Dorsolateral prefrontal cortex (tissue), 120 donors: ENCODE measurements at regions of chr5 and their contacts with region 1.

Region 1: DNA sequence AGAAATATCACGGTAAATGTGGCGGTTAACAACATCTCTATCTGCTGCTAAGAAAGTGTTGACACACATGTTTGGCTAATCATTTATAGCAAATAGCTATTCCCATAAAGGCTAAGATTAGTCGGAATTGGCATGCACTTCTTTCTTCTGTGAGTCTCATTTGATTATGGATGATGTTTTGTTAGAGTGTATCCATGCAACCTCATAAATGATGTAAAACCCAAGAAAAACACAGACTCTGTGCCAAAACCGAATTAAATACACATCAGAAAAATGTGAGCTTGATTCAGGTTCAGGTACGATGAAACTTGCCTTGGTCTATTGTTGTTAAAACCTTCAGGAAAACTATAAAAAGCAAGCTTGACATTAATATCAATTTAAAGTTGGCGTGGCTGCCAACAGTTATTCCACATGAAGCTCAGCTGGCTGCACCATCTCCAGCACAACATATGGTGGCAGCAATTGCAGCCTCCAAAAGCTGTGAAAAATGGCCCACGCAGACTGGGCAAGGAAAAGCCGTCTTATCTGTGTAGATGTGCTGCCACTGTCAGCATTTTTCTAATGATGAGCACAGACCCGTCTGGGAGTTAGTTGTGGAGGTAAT is 41.1 kb upstream of the ICE1 start:
- DNase-seq: peak; percentile 24 to 80 (median 62)
- H3K4me3 ChIP-seq: no peak overlapping the region
- H3K27ac ChIP-seq: peak overlapping the region in 4 of 59 donors; percentile 29 to 60 (median 58)
- H3K27me3 ChIP-seq: no peaks in the 10 kb centered on the region
- CTCF ChIP-seq: no peak

Region 2: GRCh38 chr5:5298068-5298633 is 83.3 kb before region 1 on chr5:
- intact Hi-C with region 1: loop called (anchors 5 kb)
- DNase-seq: peak in 1 of 10 donors; percentile 54
- H3K4me3 ChIP-seq: no peak overlapping the region
- H3K27ac ChIP-seq: peak overlapping the region in 14 of 59 donors; percentile 8 to 83 (median 46)
- H3K27me3 ChIP-seq: no peaks in the 10 kb centered on the region
- CTCF ChIP-seq: no peak

Region 3: GRCh38 chr5:5306696-5307095 is 74.7 kb before region 1 on chr5:
- intact Hi-C with region 1: loop called in 1 of 2 experiments (anchors 2 kb)
- DNase-seq: no peak
- H3K4me3 ChIP-seq: no peak overlapping the region
- H3K27ac ChIP-seq: peak overlapping the region in 28 of 59 donors; percentile 6 to 78 (median 60)
- H3K27me3 ChIP-seq: no peaks in the 10 kb centered on the region
- CTCF ChIP-seq: no peak